Lower leg skin (tissue), 4 donors: ENCODE measurements at regions of chr5 and their contacts with region 1.

Region 1: DNA sequence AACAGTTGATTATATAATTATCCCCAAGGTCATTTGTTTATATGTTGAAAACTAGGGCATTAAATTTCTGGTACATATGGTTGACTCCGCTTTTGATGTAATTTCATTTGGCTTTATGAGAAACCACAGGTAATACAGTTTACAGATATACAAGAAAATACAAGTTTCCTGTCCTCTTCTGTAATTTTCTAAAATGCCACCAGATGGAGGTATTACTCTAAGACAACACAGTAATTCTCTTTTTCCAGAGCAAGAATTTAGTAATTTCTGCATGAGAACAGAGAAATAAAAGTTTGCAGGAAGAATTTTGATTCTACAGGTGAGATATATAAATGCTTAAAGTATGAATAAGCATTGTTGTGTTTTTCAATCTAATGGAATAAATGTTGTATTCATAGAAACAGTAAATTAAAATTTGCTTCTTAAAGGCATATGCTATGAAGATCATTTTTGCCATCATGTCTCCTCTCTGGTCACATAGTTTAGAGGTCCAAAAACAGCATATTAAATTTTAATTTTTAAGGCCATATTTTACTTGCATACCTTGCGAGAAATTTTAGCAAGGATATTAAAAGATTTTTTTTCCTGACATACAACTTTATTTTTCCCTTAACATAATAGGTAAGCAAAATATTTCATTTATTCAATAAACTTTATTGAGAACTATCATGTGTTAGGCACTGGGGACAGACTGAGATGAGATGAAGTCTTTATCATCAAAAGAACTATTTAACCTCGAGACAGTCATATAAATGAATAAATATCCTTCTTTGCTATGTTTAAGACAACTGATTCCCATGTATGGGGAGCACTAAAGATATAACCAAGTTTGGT is 22.7 kb downstream of the CHD1 start:
- DNase-seq: no peak
- H3K4me3 ChIP-seq: no peak overlapping the region
- CTCF ChIP-seq: peak in 1 of 3 donors; percentile 23
- POLR2A ChIP-seq: no peak

Region 2: DNA sequence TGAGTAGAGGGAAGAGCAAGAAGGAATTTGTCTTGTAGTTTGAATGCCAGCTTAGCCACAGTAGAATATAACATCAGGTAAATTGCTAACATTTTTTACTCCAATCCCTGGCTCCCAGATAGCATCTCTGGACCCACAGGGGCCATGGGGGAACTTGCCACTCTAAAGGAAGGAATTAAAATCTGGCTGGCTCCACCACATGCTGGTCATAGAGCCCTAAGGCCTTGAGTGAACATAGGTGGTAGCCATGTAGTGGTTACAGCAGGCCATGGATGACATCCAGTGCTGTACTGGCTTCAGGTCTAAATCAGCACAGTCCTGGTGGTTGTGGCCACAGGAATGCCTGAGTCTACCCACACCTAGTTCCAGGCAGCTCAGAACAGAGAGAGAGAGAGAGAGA is 242.6 kb before region 1 on chr5:
- intact Hi-C with region 1: no loop called
- DNase-seq: no peak
- H3K4me3 ChIP-seq: peak overlapping the region; percentile 6
- CTCF ChIP-seq: no peak
- POLR2A ChIP-seq: no peak

Region 3: DNA sequence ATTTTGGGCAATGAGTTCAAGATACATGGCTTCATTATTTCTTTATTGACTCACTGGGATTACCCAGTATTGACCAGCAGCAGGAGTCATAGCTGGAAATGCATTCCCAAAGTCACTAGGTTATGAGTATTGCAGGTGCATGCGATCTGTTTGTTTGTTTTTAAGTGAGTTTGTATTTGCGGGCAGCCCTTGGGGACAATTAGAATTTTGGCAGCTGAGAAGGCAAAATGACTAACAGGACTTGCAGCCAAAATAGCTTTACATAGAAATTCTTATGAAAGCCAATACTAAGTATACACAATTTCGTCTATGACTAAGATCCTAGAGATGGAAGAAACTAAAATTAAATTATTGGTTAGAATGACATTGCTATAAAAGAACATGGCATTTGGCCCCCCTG is 150.7 kb before region 1 on chr5:
- intact Hi-C with region 1: no loop called
- DNase-seq: no peak
- H3K4me3 ChIP-seq: no peak overlapping the region
- CTCF ChIP-seq: no peak
- POLR2A ChIP-seq: no peak

Region 4: GRCh38 chr5:99032234-99033013 is 126.3 kb after region 1 on chr5:
- intact Hi-C with region 1: loop called (anchors 10 kb)
- DNase-seq: peak in 1 of 2 donors; percentile 58
- H3K4me3 ChIP-seq: no peak overlapping the region
- CTCF ChIP-seq: peak in 1 of 3 donors; percentile 27
- POLR2A ChIP-seq: no peak

Region 5: GRCh38 chr5:99060306-99061261 is 154.5 kb after region 1 on chr5:
- intact Hi-C with region 1: loop called (anchors 10 kb)
- DNase-seq: peak; percentile 61 to 95
- H3K4me3 ChIP-seq: no peak overlapping the region
- CTCF ChIP-seq: no peak
- POLR2A ChIP-seq: no peak

Region 6: GRCh38 chr5:99646011-99646647 is 740.1 kb after region 1 on chr5:
- intact Hi-C with region 1: no loop called
- DNase-seq: no peak
- H3K4me3 ChIP-seq: no peak overlapping the region
- CTCF ChIP-seq: no peak
- POLR2A ChIP-seq: no peak